CD4-positive, alpha-beta memory T cell (primary cell): ENCODE measurements at regions of chr9 and their contacts with region 1.

Region 1: DNA sequence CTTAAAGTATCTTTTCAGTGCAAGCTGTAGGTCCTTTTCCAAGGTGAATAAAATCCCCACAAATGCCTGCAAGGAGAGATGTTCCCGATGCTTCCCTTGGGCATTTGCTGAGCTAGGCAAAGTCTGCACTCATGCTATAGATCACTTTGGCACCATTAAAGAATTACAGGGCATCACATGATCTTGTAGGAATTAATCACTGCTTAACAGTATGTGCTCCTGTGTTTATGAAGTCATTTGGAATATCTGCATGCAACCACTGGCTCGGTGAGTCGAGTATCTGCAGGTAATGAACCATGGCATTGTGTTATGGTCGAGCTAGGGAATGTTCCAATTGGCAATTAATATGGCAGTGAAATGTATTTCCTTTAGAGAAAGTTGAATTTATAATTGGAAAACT is 615.1 kb downstream of the TLE1 start:
- DNase-seq: no peak
- H3K4me3 ChIP-seq: no peak overlapping the region
- H3K4me3 Mint-ChIP-seq: no peak overlapping the region
- H3K27ac ChIP-seq: no peak overlapping the region
- H3K27ac Mint-ChIP-seq: no peak overlapping the region
- H3K4me1 ChIP-seq: no peaks in the 10 kb centered on the region
- H3K4me1 Mint-ChIP-seq: peaks cover 0 to 1% (median 0%) of the 10 kb centered on the region in 4 donors
- H3K27me3 ChIP-seq: no peaks in the 10 kb centered on the region
- H3K27me3 Mint-ChIP-seq: no peaks in the 10 kb centered on the region

Region 2: DNA sequence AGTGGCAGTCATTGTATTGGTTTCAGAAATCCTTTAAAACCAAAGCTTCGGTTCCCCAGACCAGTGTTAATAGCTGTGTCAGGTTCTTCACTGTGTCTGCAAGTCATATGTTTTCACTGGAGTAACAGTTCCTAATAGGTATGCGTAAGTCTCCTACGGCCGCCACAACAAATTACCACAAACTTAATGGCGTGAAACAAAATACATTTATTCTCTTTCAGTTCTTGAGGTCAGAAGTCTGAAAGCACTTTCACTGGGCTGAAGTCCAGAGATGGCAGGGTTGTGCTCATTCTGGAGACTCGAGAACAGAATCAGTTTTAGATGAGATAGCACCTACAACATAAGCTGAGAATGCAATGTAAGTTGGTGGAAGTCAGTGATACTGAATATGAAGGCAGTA is 946.3 kb before region 1 on chr9:
- CTCF ChIA-PET with region 1: no interaction called
- POLR2A ChIA-PET with region 1: no interaction called
- intact Hi-C with region 1: no loop called
- DNase-seq: no peak
- H3K4me3 ChIP-seq: no peak overlapping the region
- H3K4me3 Mint-ChIP-seq: no peak overlapping the region
- H3K27ac ChIP-seq: no peak overlapping the region
- H3K27ac Mint-ChIP-seq: no peak overlapping the region
- H3K4me1 ChIP-seq: no peaks in the 10 kb centered on the region
- H3K4me1 Mint-ChIP-seq: no peaks in the 10 kb centered on the region
- H3K27me3 ChIP-seq: no peaks in the 10 kb centered on the region
- H3K27me3 Mint-ChIP-seq: peaks cover 0 to 5% of the 10 kb centered on the region in 2 donors

Region 3: GRCh38 chr9:81053298-81054025 is 20.8 kb before region 1 on chr9:
- CTCF ChIA-PET with region 1: no interaction called
- POLR2A ChIA-PET with region 1: no interaction called
- intact Hi-C with region 1: loop called (anchors 2 kb)
- DNase-seq: no peak
- H3K4me3 ChIP-seq: no peak overlapping the region
- H3K4me3 Mint-ChIP-seq: no peak overlapping the region
- H3K27ac ChIP-seq: no peak overlapping the region
- H3K27ac Mint-ChIP-seq: no peak overlapping the region
- H3K4me1 ChIP-seq: no peaks in the 10 kb centered on the region
- H3K4me1 Mint-ChIP-seq: no peaks in the 10 kb centered on the region
- H3K27me3 ChIP-seq: no peaks in the 10 kb centered on the region
- H3K27me3 Mint-ChIP-seq: no peaks in the 10 kb centered on the region

Region 4: GRCh38 chr9:81086416-81086815 is 12.2 kb after region 1 on chr9:
- CTCF ChIA-PET with region 1: no interaction called
- POLR2A ChIA-PET with region 1: no interaction called
- intact Hi-C with region 1: no loop called
- DNase-seq: no peak
- H3K4me3 ChIP-seq: no peak overlapping the region
- H3K4me3 Mint-ChIP-seq: no peak overlapping the region
- H3K27ac ChIP-seq: no peak overlapping the region
- H3K27ac Mint-ChIP-seq: no peak overlapping the region
- H3K4me1 ChIP-seq: no peaks in the 10 kb centered on the region
- H3K4me1 Mint-ChIP-seq: no peaks in the 10 kb centered on the region
- H3K27me3 ChIP-seq: no peaks in the 10 kb centered on the region
- H3K27me3 Mint-ChIP-seq: no peaks in the 10 kb centered on the region

Region 5: DNA sequence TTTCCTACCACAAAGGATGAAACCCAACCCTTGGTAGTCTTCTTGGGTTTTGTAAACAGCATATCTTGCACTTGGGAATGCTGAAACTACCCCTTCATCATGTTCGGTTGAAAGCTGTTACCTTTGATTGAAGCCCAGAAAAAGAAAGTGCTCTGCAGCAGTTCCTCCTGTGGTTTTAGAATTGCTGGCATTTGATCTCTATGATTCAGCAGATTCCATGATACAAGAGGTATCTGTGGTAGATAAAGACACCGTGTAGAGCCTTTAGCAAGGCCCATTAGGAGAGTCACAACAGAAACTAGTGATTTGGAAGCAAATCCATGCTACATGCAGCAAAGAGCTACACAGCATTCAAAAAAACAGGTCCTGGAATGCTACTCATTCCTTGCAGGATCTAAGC is 58.1 kb after region 1 on chr9:
- CTCF ChIA-PET with region 1: no interaction called
- POLR2A ChIA-PET with region 1: no interaction called
- intact Hi-C with region 1: no loop called
- DNase-seq: no peak
- H3K4me3 ChIP-seq: no peak overlapping the region
- H3K4me3 Mint-ChIP-seq: no peak overlapping the region
- H3K27ac ChIP-seq: no peak overlapping the region
- H3K27ac Mint-ChIP-seq: no peak overlapping the region
- H3K4me1 ChIP-seq: no peaks in the 10 kb centered on the region
- H3K4me1 Mint-ChIP-seq: no peaks in the 10 kb centered on the region
- H3K27me3 ChIP-seq: no peaks in the 10 kb centered on the region
- H3K27me3 Mint-ChIP-seq: no peaks in the 10 kb centered on the region